A673 (cell line): ENCODE measurements at regions of chr6 and their contacts with region 1.

Region 1: GRCh38 chr6:144582939-144583613 is 297.9 kb downstream of the UTRN start:
- DNase-seq: peak; percentile 88
- H3K4me3 ChIP-seq: peak overlapping the region; percentile 51
- H3K27ac ChIP-seq: peak overlapping the region; percentile 36
- H3K4me1 ChIP-seq: peaks cover 41% of the 10 kb centered on the region
- H3K27me3 ChIP-seq: no peaks in the 10 kb centered on the region
- CTCF ChIP-seq: no peak

Region 2: DNA sequence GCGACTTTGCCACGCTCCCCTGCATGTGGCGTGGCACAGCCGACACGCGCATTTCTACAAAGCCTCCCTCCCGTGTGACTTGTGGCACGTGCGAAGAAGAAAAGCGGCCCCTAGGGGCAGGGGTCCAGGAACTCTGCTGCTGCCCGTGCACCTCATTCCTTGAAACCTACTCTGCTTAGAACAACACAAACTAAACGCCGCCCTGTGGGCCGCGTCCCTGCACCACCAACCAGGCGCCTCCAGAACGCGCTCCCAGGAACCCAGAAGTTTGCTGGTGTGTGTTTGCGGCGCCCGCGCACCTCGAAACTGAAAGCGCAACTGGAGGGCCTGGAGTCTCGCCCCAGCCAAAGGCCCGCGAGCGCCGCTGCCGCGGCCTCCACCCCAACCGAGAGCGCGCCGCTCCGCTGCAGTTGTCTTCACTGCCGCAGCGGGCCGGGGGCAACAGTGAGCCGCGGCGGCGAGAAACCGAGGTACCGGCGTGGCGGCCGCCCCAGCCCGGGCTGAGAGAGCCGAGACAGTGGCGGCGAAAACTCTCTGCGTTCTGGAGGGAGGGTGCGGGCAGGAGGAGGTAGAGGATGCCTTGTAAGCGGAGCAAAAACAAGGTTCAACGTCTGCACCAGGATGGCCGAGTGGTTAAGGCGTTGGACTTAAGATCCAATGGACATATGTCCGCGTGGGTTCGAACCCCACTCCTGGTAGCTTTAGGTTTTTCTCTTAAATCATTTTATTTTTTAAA is 367.0 kb before region 1 on chr6:
- CTCF ChIA-PET with region 1: no interaction called
- POLR2A ChIA-PET with region 1: no interaction called
- intact Hi-C with region 1: loop called (anchors 5 kb)
- DNase-seq: peak; percentile 97
- H3K4me3 ChIP-seq: peak overlapping the region; percentile 65
- H3K27ac ChIP-seq: peak overlapping the region; percentile 94
- H3K4me1 ChIP-seq: no peaks in the 10 kb centered on the region
- H3K27me3 ChIP-seq: no peaks in the 10 kb centered on the region
- CTCF ChIP-seq: peak; percentile 77

Region 3: DNA sequence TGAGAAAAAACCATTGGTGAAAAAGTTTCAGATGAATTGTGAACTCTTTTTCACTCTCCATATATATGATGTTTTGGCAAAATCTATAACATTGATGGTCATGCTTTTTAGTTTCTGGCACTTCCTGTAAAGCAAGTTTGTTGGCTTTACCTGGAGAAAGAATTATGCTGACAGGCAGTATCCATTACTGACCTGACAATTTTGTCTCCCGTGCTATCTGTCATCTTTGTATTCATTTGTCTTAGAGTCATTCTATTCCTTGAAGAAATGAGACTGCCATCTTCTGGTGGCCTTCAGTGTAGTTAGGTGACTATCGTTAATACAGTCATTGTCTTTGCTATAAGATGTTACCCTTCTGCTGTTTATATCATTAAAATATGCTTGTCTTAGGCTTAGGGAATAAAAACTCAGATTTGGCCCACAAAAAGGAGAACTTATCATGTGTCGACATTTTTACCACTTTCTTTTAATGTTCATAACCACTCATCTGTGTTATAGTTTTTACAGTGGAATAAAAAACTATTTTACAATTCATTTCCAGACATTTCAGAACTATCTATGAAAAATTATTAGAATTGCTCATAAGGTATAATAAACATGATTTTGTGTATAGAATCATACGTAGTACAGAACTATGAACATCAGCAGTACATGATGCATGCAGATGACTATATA is 445.2 kb after region 1 on chr6:
- CTCF ChIA-PET with region 1: interaction called, 3 read pairs
- POLR2A ChIA-PET with region 1: no interaction called
- intact Hi-C with region 1: loop called (anchors 2 kb)
- DNase-seq: peak; percentile 86
- H3K4me3 ChIP-seq: no peak overlapping the region
- H3K27ac ChIP-seq: peak overlapping the region; percentile 61
- H3K4me1 ChIP-seq: peaks cover 51% of the 10 kb centered on the region
- H3K27me3 ChIP-seq: no peaks in the 10 kb centered on the region
- CTCF ChIP-seq: peak; percentile 80

Region 4: GRCh38 chr6:145633981-145634627 is 1051.0 kb after region 1 on chr6:
- CTCF ChIA-PET with region 1: interaction called, 3 read pairs
- POLR2A ChIA-PET with region 1: no interaction called
- intact Hi-C with region 1: loop called (anchors 1 kb)
- DNase-seq: peak; percentile 91
- H3K4me3 ChIP-seq: no peak overlapping the region
- H3K27ac ChIP-seq: no peak overlapping the region
- H3K4me1 ChIP-seq: peaks cover 39% of the 10 kb centered on the region
- H3K27me3 ChIP-seq: no peaks in the 10 kb centered on the region
- CTCF ChIP-seq: peak; percentile 90

Region 5: GRCh38 chr6:145887969-145888368 is 1304.9 kb after region 1 on chr6:
- CTCF ChIA-PET with region 1: no interaction called
- POLR2A ChIA-PET with region 1: no interaction called
- intact Hi-C with region 1: loop called (anchors 5 kb)
- DNase-seq: peak; percentile 50
- H3K4me3 ChIP-seq: no peak overlapping the region
- H3K27ac ChIP-seq: no peak overlapping the region
- H3K4me1 ChIP-seq: no peaks in the 10 kb centered on the region
- H3K27me3 ChIP-seq: no peaks in the 10 kb centered on the region
- CTCF ChIP-seq: peak; percentile 70